K562 (cell line): ENCODE measurements at regions of chr5 and their contacts with region 1.

Region 1: GRCh38 chr5:141420855-141421496 is at the start of gene PCDHGA11:
- DNase-seq: peak; percentile 57 to 61 (median 59)
- ATAC-seq: peak; percentile 83
- H3K4me3 ChIP-seq: peak within 1 kb of the TSS; percentile 17; the same call in 1 of the 2 replicates
- H3K27ac ChIP-seq: no peak within 1 kb of the TSS
- H3K4me1 ChIP-seq: peaks cover 0 to 23% of the 10 kb centered on the region in 2 experiments; a peak in 2 of 5 replicates
- H3K27me3 ChIP-seq: peaks cover 0 to 37% of the 10 kb centered on the region in 2 experiments; a peak in 3 of 5 replicates
- CTCF ChIP-seq: peak; percentile 63 to 80 (median 74)
- EP300 ChIP-seq: no peak
- POLR2A ChIP-seq: no peak
- RAD21 ChIP-seq: peak; percentile 42 to 69
- polyA plus RNA-seq, gene PCDHGA11: not detected

Region 2: GRCh38 chr5:140718241-140718580 is 702.8 kb before region 1 on chr5:
- CTCF ChIA-PET with region 1: no interaction called
- POLR2A ChIA-PET with region 1: no interaction called
- in situ Hi-C with region 1: no loop called
- intact Hi-C with region 1: no loop called
- DNase-seq: no peak
- ATAC-seq: peak; percentile 42
- H3K4me3 ChIP-seq: peak overlapping the region; percentile 42
- H3K27ac ChIP-seq: peak overlapping the region; percentile 95
- H3K4me1 ChIP-seq: peaks cover 0 to 2% of the 10 kb centered on the region in 2 experiments; a peak in 2 of 5 replicates
- H3K27me3 ChIP-seq: no peaks in the 10 kb centered on the region
- CTCF ChIP-seq: no peak
- EP300 ChIP-seq: no peak
- POLR2A ChIP-seq: no peak
- RAD21 ChIP-seq: no peak

Region 3: DNA sequence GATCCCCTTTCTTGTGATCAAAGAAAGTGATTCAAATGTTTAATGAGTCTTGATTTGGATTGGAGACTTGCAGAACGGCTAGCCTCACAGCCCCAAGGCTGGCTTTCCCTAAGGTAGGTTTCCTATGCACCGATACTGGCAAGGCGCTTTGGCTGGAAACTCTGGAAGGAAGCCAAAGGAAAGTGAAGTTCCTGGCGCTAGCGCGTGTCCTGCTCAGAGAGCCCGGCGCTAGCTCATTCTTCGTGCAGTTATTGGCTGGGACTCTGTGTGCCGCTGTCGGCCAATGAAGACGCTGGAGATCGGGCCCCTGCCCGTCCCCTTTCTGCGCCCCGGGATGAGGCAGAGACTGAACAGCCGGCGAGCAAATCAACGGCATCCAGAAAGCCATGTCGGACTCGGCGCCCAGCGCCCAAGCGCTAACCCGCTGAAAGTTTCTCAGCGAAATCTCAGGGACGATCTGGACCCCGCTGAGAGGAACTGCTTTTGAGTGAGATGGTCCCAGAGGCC is 54.7 kb after region 1 on chr5 and contains the start of gene PCDHGC3:
- CTCF ChIA-PET with region 1: no interaction called
- POLR2A ChIA-PET with region 1: no interaction called
- in situ Hi-C with region 1: no loop called
- intact Hi-C with region 1: no loop called
- DNase-seq: peak in 2 of 4 experiments; percentile 16 to 34
- ATAC-seq: peak; percentile 82
- H3K4me3 ChIP-seq: no peak within 1 kb of the TSS
- H3K27ac ChIP-seq: no peak within 1 kb of the TSS
- H3K4me1 ChIP-seq: peaks cover 0 to 14% of the 10 kb centered on the region in 2 experiments; a peak in 1 of 5 replicates
- H3K27me3 ChIP-seq: peaks cover 20 to 32% of the 10 kb centered on the region in 2 experiments; a peak in 4 of 5 replicates
- CTCF ChIP-seq: no peak; a peak in 1 of 6 replicates
- EP300 ChIP-seq: no peak
- POLR2A ChIP-seq: no peak
- RAD21 ChIP-seq: peak in 1 of 2 experiments; percentile 28; a peak in 1 of 4 replicates
- polyA plus RNA-seq, gene PCDHGC3: not detected

Region 4: GRCh38 chr5:141524604-141525597 is 103.9 kb after region 1 on chr5:
- CTCF ChIA-PET with region 1: interaction called, 6 read pairs
- POLR2A ChIA-PET with region 1: no interaction called
- in situ Hi-C with region 1: loop called (anchors 5 kb)
- intact Hi-C with region 1: no loop called
- DNase-seq: peak; percentile 79 to 86 (median 84)
- ATAC-seq: peak; percentile 94
- H3K4me3 ChIP-seq: no peak overlapping the region
- H3K27ac ChIP-seq: no peak overlapping the region
- H3K4me1 ChIP-seq: peaks cover 0 to 7% of the 10 kb centered on the region in 2 experiments; a peak in 2 of 5 replicates
- H3K27me3 ChIP-seq: no peaks in the 10 kb centered on the region
- CTCF ChIP-seq: peak; percentile 98 to 99 (median 99)
- EP300 ChIP-seq: peak; percentile 20; the same call in 1 of the 2 replicates
- POLR2A ChIP-seq: no peak
- RAD21 ChIP-seq: peak; percentile 82 to 85

Region 5: GRCh38 chr5:141557681-141558136 is 136.7 kb after region 1 on chr5:
- CTCF ChIA-PET with region 1: interaction called, 3 read pairs
- POLR2A ChIA-PET with region 1: no interaction called
- in situ Hi-C with region 1: loop called (anchors 5 kb)
- intact Hi-C with region 1: loop called (anchors 2 kb)
- DNase-seq: peak; percentile 50 to 78 (median 54)
- ATAC-seq: peak; percentile 86
- H3K4me3 ChIP-seq: no peak overlapping the region
- H3K27ac ChIP-seq: peak overlapping the region; percentile 67; the same call in 2 of the 3 replicates
- H3K4me1 ChIP-seq: no peaks in the 10 kb centered on the region; a peak in 1 of 5 replicates
- H3K27me3 ChIP-seq: no peaks in the 10 kb centered on the region
- CTCF ChIP-seq: peak; percentile 68 to 82 (median 76)
- EP300 ChIP-seq: no peak
- POLR2A ChIP-seq: no peak
- RAD21 ChIP-seq: peak; percentile 61 to 71